Gastrocnemius medialis (tissue), 4 donors: ENCODE measurements at regions of chr3 and their contacts with region 1.

Region 1: GRCh38 chr3:129249276-129250065 is at the start of gene COPG1:
- DNase-seq: peak; percentile 63 to 83
- ATAC-seq: peak; percentile 86 to 91
- H3K4me3 ChIP-seq: peak within 1 kb of the TSS; percentile 69 to 93 (median 88)
- H3K27ac ChIP-seq: peak within 1 kb of the TSS; percentile 87 to 91 (median 89)
- H3K4me1 ChIP-seq: peaks cover 23 to 27% of the 10 kb centered on the region in 2 donors
- H3K27me3 ChIP-seq: no peaks in the 10 kb centered on the region
- CTCF ChIP-seq: peak in 1 of 5 experiments; percentile 8
- POLR2A ChIP-seq: peak; percentile 88 to 92
- total RNA-seq, gene COPG1: 59.7 to 101 (median 79.8) TPM

Region 2: GRCh38 chr3:129052675-129053074 is 196.8 kb before region 1 on chr3:
- in situ Hi-C with region 1: loop called in 1 of 4 experiments (anchors 10 kb)
- intact Hi-C with region 1: loop called (anchors 2 kb)
- DNase-seq: no peak
- ATAC-seq: no peak
- H3K4me3 ChIP-seq: no peak overlapping the region
- H3K27ac ChIP-seq: peak overlapping the region in 1 of 4 donors; percentile 38
- H3K4me1 ChIP-seq: peaks cover 3 to 15% of the 10 kb centered on the region in 2 donors
- H3K27me3 ChIP-seq: no peaks in the 10 kb centered on the region
- CTCF ChIP-seq: no peak
- POLR2A ChIP-seq: no peak

Region 3: GRCh38 chr3:129120254-129121004 is 129.0 kb before region 1 on chr3:
- in situ Hi-C with region 1: no loop called
- intact Hi-C with region 1: loop called (anchors 2 kb)
- DNase-seq: peak; percentile 58 to 70
- ATAC-seq: peak; percentile 40 to 45
- H3K4me3 ChIP-seq: peak overlapping the region; percentile 74 to 85 (median 80)
- H3K27ac ChIP-seq: peak overlapping the region; percentile 87 to 92 (median 90)
- H3K4me1 ChIP-seq: peaks cover 15 to 19% of the 10 kb centered on the region in 2 donors
- H3K27me3 ChIP-seq: no peaks in the 10 kb centered on the region
- CTCF ChIP-seq: peak in 4 of 5 experiments; percentile 11 to 33 (median 28)
- POLR2A ChIP-seq: peak; percentile 33 to 66

Region 4: GRCh38 chr3:129183569-129184395 is 65.7 kb before region 1 on chr3 and contains the start of gene CNBP:
- in situ Hi-C with region 1: no loop called
- intact Hi-C with region 1: loop called (anchors 5 kb)
- DNase-seq: peak; percentile 92 to 94
- ATAC-seq: peak; percentile 64 to 68
- H3K4me3 ChIP-seq: peak within 1 kb of the TSS; percentile 85 to 97 (median 95)
- H3K27ac ChIP-seq: peak within 1 kb of the TSS; percentile 96 to 100 (median 100)
- H3K4me1 ChIP-seq: peaks cover 44 to 52% of the 10 kb centered on the region in 2 donors
- H3K27me3 ChIP-seq: no peaks in the 10 kb centered on the region
- CTCF ChIP-seq: no peak
- POLR2A ChIP-seq: peak; percentile 99 to 100
- total RNA-seq, gene CNBP: 784 to 1,263 (median 979) TPM